ENCODE measurements at regions of chr2 and their contacts with region 1.

Region 1: DNA sequence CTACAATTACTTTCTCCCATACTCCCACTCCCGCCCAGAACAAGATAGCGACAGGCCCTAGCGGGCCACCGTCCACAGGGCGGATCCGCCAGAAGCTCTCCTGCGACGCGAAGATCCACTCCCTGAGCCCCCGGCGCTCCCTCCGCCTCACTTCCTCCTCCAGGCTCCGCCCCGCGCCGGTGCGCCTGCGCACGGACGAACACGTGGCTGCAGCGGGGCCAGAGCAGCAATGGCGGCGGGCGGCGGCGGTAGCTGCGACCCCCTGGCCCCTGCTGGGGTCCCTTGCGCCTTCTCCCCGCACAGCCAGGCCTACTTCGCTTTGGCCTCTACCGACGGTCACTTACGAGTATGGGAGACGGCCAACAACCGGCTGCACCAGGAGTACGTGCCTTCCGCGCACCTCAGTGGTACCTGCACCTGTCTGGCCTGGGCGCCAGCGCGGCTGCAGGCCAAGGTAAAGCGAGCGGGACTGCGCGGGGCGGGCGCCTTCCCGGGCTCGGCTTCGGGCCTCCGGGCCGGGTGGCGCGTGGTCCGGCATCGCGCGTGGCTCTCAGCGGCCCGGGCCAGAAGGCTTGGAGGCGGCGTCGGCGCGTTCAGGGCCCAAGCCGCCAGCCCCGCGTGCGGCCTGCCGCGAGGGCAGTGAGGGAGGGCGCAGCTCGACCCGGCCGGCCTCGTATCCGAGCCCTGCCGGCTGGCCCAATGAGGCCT is at the start of gene WDR43:
- DNase-seq: peak; percentile 98
- H3K4me3 ChIP-seq: peak within 1 kb of the TSS; percentile 66 to 99 (median 88)
- H3K27ac ChIP-seq: peak within 1 kb of the TSS; percentile 82 to 90 (median 88)
- H3K4me1 ChIP-seq: peaks cover 12 to 31% (median 29%) of the 10 kb centered on the region in 4 donors
- H3K27me3 ChIP-seq: no peaks in the 10 kb centered on the region
- CTCF ChIP-seq: no peak
- EP300 ChIP-seq: no peak
- POLR2A ChIP-seq: peak; percentile 82
- total RNA-seq, gene WDR43: 15.8 to 399 (median 46.0) TPM

Region 2: GRCh38 chr2:28577791-28578680 is 316.6 kb before region 1 on chr2:
- in situ Hi-C with region 1: loop called in 1 of 4 experiments (anchors 25 kb)
- intact Hi-C with region 1: loop called (anchors 10 kb)
- DNase-seq: no peak
- H3K4me3 ChIP-seq: no peak overlapping the region
- H3K27ac ChIP-seq: no peak overlapping the region
- H3K4me1 ChIP-seq: no peaks in the 10 kb centered on the region
- H3K27me3 ChIP-seq: no peaks in the 10 kb centered on the region
- CTCF ChIP-seq: no peak
- EP300 ChIP-seq: no peak
- POLR2A ChIP-seq: no peak

Region 3: DNA sequence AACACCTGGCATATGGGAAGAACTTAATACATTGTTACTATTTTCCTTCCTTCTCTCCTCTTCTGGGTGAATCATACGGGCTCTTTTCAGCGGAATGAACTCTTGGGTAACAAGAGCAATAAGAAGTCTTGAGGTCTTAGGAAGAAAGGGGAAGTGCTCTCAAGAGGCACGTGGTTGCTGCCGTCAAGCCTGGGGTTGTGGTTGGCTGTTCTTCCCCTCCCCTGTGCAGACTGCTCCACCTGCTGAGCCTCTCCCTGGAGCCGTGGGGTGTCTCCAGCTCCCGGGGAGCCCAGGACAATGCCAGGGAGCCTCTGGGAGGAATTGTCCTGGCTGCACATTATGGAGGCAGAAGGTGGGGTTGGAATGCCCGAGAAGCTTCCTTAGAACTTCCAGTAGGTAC is 105.9 kb after region 1 on chr2:
- in situ Hi-C with region 1: no loop called
- intact Hi-C with region 1: no loop called
- DNase-seq: peak; percentile 56
- H3K4me3 ChIP-seq: no peak overlapping the region
- H3K27ac ChIP-seq: peak overlapping the region in 1 of 4 donors; percentile 33
- H3K4me1 ChIP-seq: peaks cover 0 to 4% (median 0%) of the 10 kb centered on the region in 4 donors
- H3K27me3 ChIP-seq: no peaks in the 10 kb centered on the region
- CTCF ChIP-seq: no peak
- EP300 ChIP-seq: no peak
- POLR2A ChIP-seq: no peak